B cell (primary cell): ENCODE measurements at regions of chr15 and their contacts with region 1.

Region 1: GRCh38 chr15:42332331-42332730 is 27.0 kb upstream of the CAPN3 start:
- DNase-seq: no peak
- ATAC-seq: no peak
- H3K4me3 ChIP-seq: no peak overlapping the region
- H3K4me3 Mint-ChIP-seq: no peak overlapping the region
- H3K27ac ChIP-seq: no peak overlapping the region
- H3K27ac Mint-ChIP-seq: no peak overlapping the region
- H3K4me1 ChIP-seq: no peaks in the 10 kb centered on the region
- H3K4me1 Mint-ChIP-seq: no peaks in the 10 kb centered on the region
- H3K27me3 ChIP-seq: no peaks in the 10 kb centered on the region
- H3K27me3 Mint-ChIP-seq: no peaks in the 10 kb centered on the region
- CTCF ChIP-seq: no peak

Region 2: DNA sequence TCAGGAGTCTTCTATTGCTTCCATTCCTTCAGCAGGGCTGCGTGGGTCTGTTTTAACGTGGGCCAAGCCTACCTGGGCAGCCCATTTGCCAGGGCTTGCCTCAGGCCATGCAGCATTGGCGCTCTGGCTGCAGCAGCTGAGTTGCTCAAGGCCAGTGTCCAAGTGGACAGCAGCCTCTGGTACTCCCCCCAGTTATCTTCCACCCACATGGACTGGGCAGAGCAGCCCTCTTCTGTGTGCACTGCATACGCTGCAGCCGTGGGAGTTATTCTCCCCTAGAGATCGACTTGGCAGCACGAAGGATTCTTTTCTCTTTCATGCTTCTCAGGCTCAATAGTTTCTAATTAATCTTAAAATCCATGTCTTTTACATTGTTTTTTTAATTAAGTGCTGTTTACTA is 20.1 kb after region 1 on chr15:
- CTCF ChIA-PET with region 1: no interaction called
- POLR2A ChIA-PET with region 1: no interaction called
- intact Hi-C with region 1: loop called (anchors 1 kb)
- DNase-seq: no peak
- ATAC-seq: no peak
- H3K4me3 ChIP-seq: no peak overlapping the region
- H3K4me3 Mint-ChIP-seq: no peak overlapping the region
- H3K27ac ChIP-seq: no peak overlapping the region
- H3K27ac Mint-ChIP-seq: no peak overlapping the region
- H3K4me1 ChIP-seq: no peaks in the 10 kb centered on the region
- H3K4me1 Mint-ChIP-seq: no peaks in the 10 kb centered on the region
- H3K27me3 ChIP-seq: no peaks in the 10 kb centered on the region
- H3K27me3 Mint-ChIP-seq: no peaks in the 10 kb centered on the region
- CTCF ChIP-seq: no peak